Kidney (tissue), 22 donors: ENCODE measurements at regions of chr3 and their contacts with region 1.

Region 1: GRCh38 chr3:111967651-111968274 is 11.1 kb upstream of the ABHD10 start:
- DNase-seq: peak; percentile 82 to 91 (median 88)
- H3K4me3 ChIP-seq: no peak overlapping the region
- H3K27ac ChIP-seq: peak overlapping the region; percentile 64 to 78
- H3K4me1 ChIP-seq: peaks cover 0 to 27% (median 16%) of the 10 kb centered on the region in 3 donors
- H3K27me3 ChIP-seq: no peaks in the 10 kb centered on the region
- CTCF ChIP-seq: peak; percentile 89

Region 2: DNA sequence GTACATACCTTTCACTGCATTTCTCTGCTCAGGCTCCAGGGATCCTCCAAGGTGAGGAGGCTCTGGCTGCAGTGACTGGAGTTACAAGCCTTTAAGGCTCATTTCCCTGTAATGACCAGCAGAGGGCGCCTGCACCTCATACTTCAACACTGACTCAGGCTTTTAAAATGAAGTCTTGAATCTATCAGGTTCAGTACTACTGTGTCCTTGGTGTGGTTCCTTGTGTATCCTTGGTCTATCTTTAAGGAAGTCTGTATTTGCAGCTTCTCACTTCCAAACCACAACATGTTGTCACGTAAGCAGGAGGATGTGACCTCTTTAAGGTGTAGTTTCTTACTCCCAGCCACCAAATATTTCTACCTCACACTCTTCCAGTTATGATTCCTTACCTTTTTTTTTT is 250.2 kb before region 1 on chr3:
- intact Hi-C with region 1: loop called (anchors 5 kb)
- DNase-seq: peak in 4 of 5 donors; percentile 82 to 94 (median 88)
- H3K4me3 ChIP-seq: peak overlapping the region in 1 of 3 donors; percentile 5
- H3K27ac ChIP-seq: no peak overlapping the region
- H3K4me1 ChIP-seq: peaks cover 0 to 2% (median 0%) of the 10 kb centered on the region in 3 donors
- H3K27me3 ChIP-seq: no peaks in the 10 kb centered on the region
- CTCF ChIP-seq: peak; percentile 100

Region 3: DNA sequence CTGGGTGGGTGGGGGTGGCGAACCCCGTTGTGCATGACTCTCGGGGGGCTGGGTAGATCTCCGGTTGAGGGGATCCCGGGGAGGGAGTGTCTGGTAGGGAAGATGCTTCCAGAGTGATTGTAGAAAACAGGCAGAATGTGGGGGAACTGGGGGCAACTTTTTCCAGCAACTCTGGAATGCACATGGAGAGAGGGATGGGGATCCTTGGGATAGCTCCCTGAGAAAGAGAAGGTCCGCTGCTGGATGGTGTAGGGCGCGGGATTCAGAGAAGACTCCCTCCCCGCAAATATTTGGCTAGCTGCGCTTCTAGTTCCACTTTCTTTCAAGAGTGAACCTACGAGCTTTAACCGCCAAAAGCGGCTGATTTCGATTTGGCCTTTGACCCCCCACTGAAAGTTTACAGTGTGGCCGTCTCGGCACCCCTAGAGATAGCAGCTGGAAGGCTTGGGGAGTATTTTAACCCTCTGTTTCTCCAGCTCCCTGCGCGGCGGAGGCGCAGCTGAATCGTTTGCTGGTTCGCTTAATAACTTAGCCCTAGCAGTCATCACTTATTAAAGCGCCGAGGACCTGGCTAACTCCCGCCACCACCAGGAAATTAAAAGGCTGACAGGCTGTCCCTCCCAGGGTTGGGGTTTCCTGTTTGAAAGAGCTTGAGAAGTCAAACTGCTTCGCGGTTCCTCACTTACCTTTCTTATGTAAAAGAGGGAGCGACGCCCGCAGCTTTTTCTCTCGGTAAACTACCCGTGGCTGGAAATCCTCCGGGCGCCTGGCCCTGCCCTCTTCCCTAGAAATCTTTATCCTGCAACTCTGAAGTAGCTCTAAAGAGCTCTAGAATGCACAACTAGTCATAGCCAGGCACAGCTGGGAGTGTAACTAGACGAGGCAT is 107.5 kb before region 1 on chr3:
- intact Hi-C with region 1: no loop called
- DNase-seq: peak; percentile 86 to 96 (median 90)
- H3K4me3 ChIP-seq: peak overlapping the region; percentile 81 to 85 (median 84)
- H3K27ac ChIP-seq: peak overlapping the region; percentile 93 to 97
- H3K4me1 ChIP-seq: peaks cover 0 to 30% (median 15%) of the 10 kb centered on the region in 3 donors
- H3K27me3 ChIP-seq: no peaks in the 10 kb centered on the region
- CTCF ChIP-seq: peak; percentile 48

Region 4: DNA sequence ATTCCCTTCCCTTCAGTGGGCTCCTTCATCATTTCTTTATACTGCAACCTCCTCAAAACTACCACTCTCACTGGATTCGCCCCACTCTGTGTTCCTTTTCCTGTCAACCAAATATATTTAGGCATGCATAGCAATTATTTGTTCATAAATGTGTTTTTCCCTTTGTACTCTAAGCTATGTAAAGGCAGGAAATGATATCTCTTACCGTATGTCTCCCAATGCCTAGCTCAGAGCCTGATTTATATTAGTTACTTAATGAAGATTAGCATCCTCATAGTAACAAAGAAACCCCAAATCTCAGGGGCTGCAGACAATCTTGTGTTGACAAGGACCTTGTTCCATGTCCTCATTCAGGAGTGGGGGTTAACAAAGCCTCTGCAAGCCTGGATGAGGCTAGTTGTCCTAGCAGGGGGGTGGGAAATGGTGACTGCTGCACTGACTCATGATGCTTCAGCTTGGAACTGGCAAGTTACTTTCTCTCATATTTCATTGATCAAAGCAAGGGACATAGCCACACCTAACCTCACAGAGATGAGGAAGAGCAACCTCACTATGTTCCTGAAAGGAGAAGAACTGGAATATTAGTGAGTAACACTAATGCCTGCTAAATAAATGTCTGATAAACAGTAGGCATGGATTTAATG is 93.5 kb before region 1 on chr3:
- intact Hi-C with region 1: loop called (anchors 10 kb)
- DNase-seq: no peak
- H3K4me3 ChIP-seq: no peak overlapping the region
- H3K27ac ChIP-seq: no peak overlapping the region
- H3K4me1 ChIP-seq: peaks cover 0 to 7% (median 2%) of the 10 kb centered on the region in 3 donors
- H3K27me3 ChIP-seq: no peaks in the 10 kb centered on the region
- CTCF ChIP-seq: no peak